Naive thymus-derived CD4-positive, alpha-beta T cell (primary cell): ENCODE measurements at regions of chr5 and their contacts with region 1.

Region 1: GRCh38 chr5:112921833-112922817 is at the start of gene REEP5:
- DNase-seq: peak; percentile 68 to 89 (median 82)
- ATAC-seq: peak; percentile 91
- H3K4me3 ChIP-seq: peak within 1 kb of the TSS; percentile 76
- H3K4me3 Mint-ChIP-seq: peak within 1 kb of the TSS; percentile 77 to 99 (median 91)
- H3K27ac ChIP-seq: peak within 1 kb of the TSS; percentile 79
- H3K27ac Mint-ChIP-seq: peak within 1 kb of the TSS; percentile 88 to 97 (median 92)
- H3K4me1 ChIP-seq: peaks cover 49 to 52% of the 10 kb centered on the region in 2 donors
- H3K4me1 Mint-ChIP-seq: peaks cover 47 to 74% (median 61%) of the 10 kb centered on the region in 7 donors
- H3K27me3 ChIP-seq: no peaks in the 10 kb centered on the region
- H3K27me3 Mint-ChIP-seq: no peaks in the 10 kb centered on the region
- total RNA-seq, gene REEP5: 16.4 to 83.9 (median 30.0) TPM

Region 2: DNA sequence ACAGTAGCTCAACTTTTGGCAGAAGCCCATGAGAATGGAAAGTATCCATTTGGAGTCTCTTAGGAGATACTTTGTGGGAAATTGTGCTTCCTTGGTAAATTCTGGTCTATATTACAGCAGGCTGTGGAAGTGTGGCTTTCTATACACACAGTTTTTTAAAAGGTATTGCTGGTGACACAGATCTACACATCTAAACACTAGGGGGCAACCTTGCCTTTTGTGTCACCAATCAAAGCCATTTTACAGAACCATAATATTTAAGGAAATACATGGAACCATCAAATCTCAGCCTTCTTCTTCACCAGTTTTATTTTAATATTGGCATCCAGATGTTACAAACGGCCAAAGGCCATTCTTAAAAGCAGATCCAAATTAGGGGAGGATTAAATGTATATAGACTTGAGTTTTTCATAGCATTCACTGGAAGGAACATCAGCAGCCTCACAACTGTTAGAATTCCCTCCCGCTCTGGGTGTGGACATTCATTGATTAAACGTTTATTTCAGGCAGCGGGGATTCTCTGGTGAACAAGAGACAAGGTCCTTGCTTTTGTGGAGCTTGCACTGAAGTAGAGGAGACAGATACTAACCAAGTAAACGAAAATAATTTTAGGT is 370.6 kb before region 1 on chr5:
- CTCF ChIA-PET with region 1: no interaction called
- POLR2A ChIA-PET with region 1: no interaction called
- intact Hi-C with region 1: loop called (anchors 1 to 2 kb)
- DNase-seq: peak in 7 of 9 donors; percentile 23 to 67 (median 48)
- ATAC-seq: peak; percentile 71
- H3K4me3 ChIP-seq: no peak overlapping the region
- H3K4me3 Mint-ChIP-seq: no peak overlapping the region
- H3K27ac ChIP-seq: no peak overlapping the region
- H3K27ac Mint-ChIP-seq: no peak overlapping the region
- H3K4me1 ChIP-seq: no peaks in the 10 kb centered on the region
- H3K4me1 Mint-ChIP-seq: peaks cover 0 to 4% (median 0%) of the 10 kb centered on the region in 7 donors
- H3K27me3 ChIP-seq: no peaks in the 10 kb centered on the region
- H3K27me3 Mint-ChIP-seq: peaks cover 0 to 16% (median 5%) of the 10 kb centered on the region in 5 donors

Region 3: DNA sequence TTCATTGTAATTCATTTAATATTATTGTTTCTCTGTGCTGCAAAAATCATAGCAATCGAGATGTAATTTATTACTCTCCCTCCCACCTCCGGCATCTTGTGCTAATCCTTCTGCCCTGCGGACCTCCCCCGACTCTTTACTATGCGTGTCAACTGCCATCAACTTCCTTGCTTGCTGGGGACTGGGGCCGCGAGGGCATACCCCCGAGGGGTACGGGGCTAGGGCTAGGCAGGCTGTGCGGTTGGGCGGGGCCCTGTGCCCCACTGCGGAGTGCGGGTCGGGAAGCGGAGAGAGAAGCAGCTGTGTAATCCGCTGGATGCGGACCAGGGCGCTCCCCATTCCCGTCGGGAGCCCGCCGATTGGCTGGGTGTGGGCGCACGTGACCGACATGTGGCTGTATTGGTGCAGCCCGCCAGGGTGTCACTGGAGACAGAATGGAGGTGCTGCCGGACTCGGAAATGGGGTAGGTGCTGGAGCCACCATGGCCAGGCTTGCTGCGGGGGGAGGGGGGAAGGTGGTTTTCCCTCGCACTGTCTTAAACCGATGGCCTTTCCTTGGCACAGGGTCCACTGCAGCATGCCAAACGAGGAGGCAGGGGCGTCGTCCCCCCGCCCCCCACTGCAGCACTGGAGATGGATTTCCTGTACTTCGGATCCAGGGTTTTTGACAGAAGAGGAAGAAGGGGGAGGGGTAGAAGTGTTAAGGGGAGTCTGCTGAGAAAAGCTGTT is 184.5 kb before region 1 on chr5 and contains the start of gene APC:
- CTCF ChIA-PET with region 1: no interaction called
- POLR2A ChIA-PET with region 1: no interaction called
- intact Hi-C with region 1: loop called in 1 of 2 experiments (anchors 10 kb)
- DNase-seq: peak; percentile 52 to 81 (median 66)
- ATAC-seq: peak; percentile 97
- H3K4me3 ChIP-seq: peak within 1 kb of the TSS; percentile 76
- H3K4me3 Mint-ChIP-seq: peak within 1 kb of the TSS; percentile 93 to 98 (median 95)
- H3K27ac ChIP-seq: peak within 1 kb of the TSS; percentile 58
- H3K27ac Mint-ChIP-seq: peak within 1 kb of the TSS; percentile 3 to 88 (median 51)
- H3K4me1 ChIP-seq: peaks cover 0 to 9% of the 10 kb centered on the region in 2 donors
- H3K4me1 Mint-ChIP-seq: peaks cover 18 to 63% (median 38%) of the 10 kb centered on the region in 7 donors
- H3K27me3 ChIP-seq: no peaks in the 10 kb centered on the region
- H3K27me3 Mint-ChIP-seq: peaks cover 0 to 5% (median 0%) of the 10 kb centered on the region in 5 donors
- total RNA-seq, gene APC: 25.1 to 53.2 (median 37.6) TPM

Region 4: DNA sequence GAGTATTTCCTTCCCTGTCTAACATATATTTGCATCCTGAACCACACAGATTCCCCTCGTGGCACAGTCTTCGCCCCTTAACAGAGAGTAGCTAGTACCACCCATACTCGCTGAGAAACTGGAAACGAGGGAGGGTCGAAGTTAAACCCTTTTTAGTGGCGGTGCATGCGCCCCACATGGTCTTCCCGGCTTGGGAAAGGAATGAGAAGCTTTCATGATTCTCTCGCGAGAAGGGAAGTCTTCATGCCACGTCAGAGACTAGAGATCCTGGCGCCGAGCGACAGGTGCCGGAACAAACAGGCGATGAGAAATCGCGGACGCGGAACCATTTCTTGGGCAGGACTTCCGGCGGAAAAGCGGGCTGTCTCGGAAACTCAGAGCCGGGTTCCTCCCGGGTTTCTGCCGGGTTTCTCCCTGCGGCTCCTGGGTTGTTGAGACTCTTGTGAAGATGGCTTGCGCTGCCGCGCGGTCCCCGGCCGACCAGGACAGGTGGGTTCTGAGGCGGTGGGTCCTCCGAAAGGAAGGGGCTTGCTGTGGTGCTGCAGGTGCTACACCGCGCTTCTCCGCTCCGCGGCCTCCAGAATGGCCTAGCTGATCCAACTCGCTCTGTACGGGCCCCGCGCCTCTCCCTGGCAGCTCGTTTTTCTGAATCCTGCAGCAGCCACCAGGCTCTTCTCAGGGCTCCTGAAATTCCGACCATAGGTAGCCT is 61.0 kb before region 1 on chr5 and contains the start of gene SRP19:
- CTCF ChIA-PET with region 1: interaction called, 4 read pairs
- POLR2A ChIA-PET with region 1: interaction called, 24 read pairs
- intact Hi-C with region 1: loop called (anchors 1 kb)
- DNase-seq: peak; percentile 78 to 93 (median 90)
- ATAC-seq: peak; percentile 96
- H3K4me3 ChIP-seq: peak within 1 kb of the TSS; percentile 88
- H3K4me3 Mint-ChIP-seq: peak within 1 kb of the TSS; percentile 91 to 97 (median 96)
- H3K27ac ChIP-seq: peak within 1 kb of the TSS; percentile 89
- H3K27ac Mint-ChIP-seq: peak within 1 kb of the TSS; percentile 95 to 99 (median 97)
- H3K4me1 ChIP-seq: peaks cover 19% of the 10 kb centered on the region in 2 donors
- H3K4me1 Mint-ChIP-seq: peaks cover 5 to 41% (median 32%) of the 10 kb centered on the region in 7 donors
- H3K27me3 ChIP-seq: no peaks in the 10 kb centered on the region
- H3K27me3 Mint-ChIP-seq: peaks cover 5 to 18% (median 6%) of the 10 kb centered on the region in 5 donors
- total RNA-seq, gene SRP19: 34.2 to 70.9 (median 41.5) TPM

Region 5: GRCh38 chr5:112940670-112941069 is 18.5 kb after region 1 on chr5:
- CTCF ChIA-PET with region 1: interaction called, 3 read pairs
- POLR2A ChIA-PET with region 1: interaction called, 3 read pairs
- intact Hi-C with region 1: loop called in 1 of 2 experiments (anchors 2 kb)
- DNase-seq: no peak
- ATAC-seq: no peak
- H3K4me3 ChIP-seq: no peak overlapping the region
- H3K4me3 Mint-ChIP-seq: no peak overlapping the region
- H3K27ac ChIP-seq: no peak overlapping the region
- H3K27ac Mint-ChIP-seq: no peak overlapping the region
- H3K4me1 ChIP-seq: no peaks in the 10 kb centered on the region
- H3K4me1 Mint-ChIP-seq: peaks cover 0 to 9% (median 4%) of the 10 kb centered on the region in 7 donors
- H3K27me3 ChIP-seq: no peaks in the 10 kb centered on the region
- H3K27me3 Mint-ChIP-seq: peaks cover 0 to 11% (median 0%) of the 10 kb centered on the region in 5 donors

Region 6: GRCh38 chr5:112976432-112977309 is 54.5 kb after region 1 on chr5 and contains the start of gene DCP2:
- CTCF ChIA-PET with region 1: interaction called, 5 read pairs
- POLR2A ChIA-PET with region 1: interaction called, 29 read pairs
- intact Hi-C with region 1: loop called (anchors 1 kb)
- DNase-seq: peak; percentile 84 to 98 (median 97)
- ATAC-seq: peak; percentile 98
- H3K4me3 ChIP-seq: peak within 1 kb of the TSS; percentile 75
- H3K4me3 Mint-ChIP-seq: peak within 1 kb of the TSS; percentile 88 to 99 (median 98)
- H3K27ac ChIP-seq: peak within 1 kb of the TSS; percentile 83
- H3K27ac Mint-ChIP-seq: peak within 1 kb of the TSS; percentile 89 to 98 (median 95)
- H3K4me1 ChIP-seq: peaks cover 7 to 21% of the 10 kb centered on the region in 2 donors
- H3K4me1 Mint-ChIP-seq: peaks cover 35 to 54% (median 51%) of the 10 kb centered on the region in 7 donors
- H3K27me3 ChIP-seq: no peaks in the 10 kb centered on the region
- H3K27me3 Mint-ChIP-seq: no peaks in the 10 kb centered on the region
- total RNA-seq, gene DCP2: 60.2 to 101 (median 85.1) TPM

Region 7: GRCh38 chr5:113330533-113331208 is 408.5 kb after region 1 on chr5:
- CTCF ChIA-PET with region 1: interaction called, 3 read pairs
- POLR2A ChIA-PET with region 1: no interaction called
- intact Hi-C with region 1: loop called in 1 of 2 experiments (anchors 1 kb)
- DNase-seq: peak in 7 of 9 donors; percentile 56 to 80 (median 73)
- ATAC-seq: peak; percentile 91
- H3K4me3 ChIP-seq: no peak overlapping the region
- H3K4me3 Mint-ChIP-seq: peak overlapping the region in 9 of 10 donors; percentile 8 to 63 (median 40)
- H3K27ac ChIP-seq: no peak overlapping the region
- H3K27ac Mint-ChIP-seq: peak overlapping the region in 7 of 9 donors; percentile 3 to 82 (median 71)
- H3K4me1 ChIP-seq: peaks cover 0 to 4% of the 10 kb centered on the region in 2 donors
- H3K4me1 Mint-ChIP-seq: peaks cover 3 to 21% (median 19%) of the 10 kb centered on the region in 7 donors
- H3K27me3 ChIP-seq: peaks cover 0 to under 1% of the 10 kb centered on the region in 2 donors
- H3K27me3 Mint-ChIP-seq: peaks cover 0 to 13% (median 2%) of the 10 kb centered on the region in 5 donors